PC-3 (cell line): ENCODE measurements at regions of chr6 and their contacts with region 1.

Region 1: DNA sequence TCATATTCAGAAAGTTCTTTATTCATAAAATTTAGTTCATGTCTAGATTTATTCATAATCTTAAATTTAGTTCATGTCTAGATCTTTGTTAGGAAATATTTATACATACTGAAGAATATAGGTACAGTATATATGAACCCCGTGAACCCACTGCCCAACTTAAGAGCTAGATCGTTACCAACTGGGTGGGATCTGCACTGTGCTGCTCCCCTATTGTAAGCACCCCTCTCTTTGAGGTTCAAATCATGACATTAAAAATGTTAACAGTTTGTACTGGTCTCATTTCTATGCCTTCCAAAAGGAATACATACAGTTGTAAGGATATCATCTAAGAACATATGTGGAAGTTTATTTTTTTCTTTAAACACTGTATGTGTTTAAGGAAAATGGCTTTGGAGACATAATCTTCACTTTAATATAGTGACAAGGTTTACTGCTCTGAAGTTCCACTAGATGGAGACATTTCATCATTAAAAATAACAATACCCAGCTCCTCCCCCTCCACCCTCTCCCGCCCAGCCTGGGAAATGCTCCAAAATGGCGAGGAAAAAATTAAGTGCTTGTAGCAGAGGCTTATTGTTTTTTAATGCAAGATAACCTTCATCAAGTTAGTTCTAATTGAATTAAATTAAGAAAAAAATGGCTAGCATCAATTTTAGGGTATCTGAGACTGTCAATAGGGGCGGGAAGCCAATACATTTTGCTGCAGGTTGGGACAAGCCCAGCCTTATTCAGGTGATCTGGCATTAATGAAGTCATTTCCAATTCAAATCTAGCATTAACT is 104.1 kb upstream of the TRAF3IP2 start:
- DNase-seq: peak; percentile 71
- ATAC-seq: peak; percentile 81
- H3K4me3 ChIP-seq: peak overlapping the region; percentile 30; the same call in 1 of the 2 replicates
- H3K27ac ChIP-seq: no peak overlapping the region
- H3K4me1 ChIP-seq: peaks cover 4% of the 10 kb centered on the region; the same call in 1 of the 2 replicates
- H3K27me3 ChIP-seq: no peaks in the 10 kb centered on the region
- CTCF ChIP-seq: peak; percentile 69

Region 2: DNA sequence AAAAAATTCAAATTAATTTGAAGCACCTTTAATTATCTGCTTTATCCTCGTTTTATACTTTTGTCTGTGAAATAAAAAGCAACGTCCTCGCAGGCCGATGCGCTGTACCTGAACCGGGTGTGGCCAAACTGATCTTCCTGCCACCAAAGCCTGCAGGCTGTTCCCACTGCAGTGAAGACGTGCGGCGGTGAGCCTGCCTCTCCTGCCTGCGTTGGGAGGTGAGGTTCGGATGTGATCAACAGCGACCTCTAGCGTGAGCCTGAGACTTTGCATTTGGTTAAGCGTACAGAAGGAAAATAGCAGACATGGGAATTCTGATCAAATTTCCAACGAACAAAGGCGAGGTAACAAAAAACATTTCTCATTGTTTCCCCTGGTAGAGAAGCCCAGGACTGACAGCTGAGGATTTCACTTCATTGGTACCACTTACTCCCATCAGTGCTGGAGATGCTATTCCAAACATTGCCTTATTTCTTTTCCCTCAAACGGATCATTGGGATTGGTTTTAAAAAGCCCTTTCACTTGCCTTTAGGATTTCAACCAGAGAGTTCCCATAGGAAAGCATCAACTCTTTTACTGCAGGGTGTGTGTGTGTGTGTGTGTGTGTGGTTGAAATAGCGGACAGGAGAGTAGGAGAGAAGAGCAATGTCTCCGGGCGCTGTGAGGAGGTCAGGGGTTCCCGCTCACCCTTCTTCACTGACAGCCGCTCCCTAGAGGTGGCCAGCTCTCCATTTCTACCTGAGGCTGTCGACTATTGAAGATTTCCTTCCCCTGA is 287.5 kb after region 1 on chr6:
- CTCF ChIA-PET with region 1: no interaction called
- POLR2A ChIA-PET with region 1: no interaction called
- intact Hi-C with region 1: loop called (anchors 1 kb)
- DNase-seq: peak; percentile 76
- ATAC-seq: peak; percentile 87
- H3K4me3 ChIP-seq: peak overlapping the region; percentile 21; the same call in 1 of the 2 replicates
- H3K27ac ChIP-seq: no peak overlapping the region
- H3K4me1 ChIP-seq: peaks cover 24% of the 10 kb centered on the region
- H3K27me3 ChIP-seq: no peaks in the 10 kb centered on the region
- CTCF ChIP-seq: peak; percentile 82

Region 3: GRCh38 chr6:112169541-112169940 is 459.7 kb after region 1 on chr6:
- CTCF ChIA-PET with region 1: no interaction called
- POLR2A ChIA-PET with region 1: no interaction called
- intact Hi-C with region 1: loop called (anchors 5 kb)
- DNase-seq: no peak
- ATAC-seq: no peak
- H3K4me3 ChIP-seq: no peak overlapping the region
- H3K27ac ChIP-seq: no peak overlapping the region
- H3K4me1 ChIP-seq: no peaks in the 10 kb centered on the region
- H3K27me3 ChIP-seq: no peaks in the 10 kb centered on the region
- CTCF ChIP-seq: no peak

Region 4: DNA sequence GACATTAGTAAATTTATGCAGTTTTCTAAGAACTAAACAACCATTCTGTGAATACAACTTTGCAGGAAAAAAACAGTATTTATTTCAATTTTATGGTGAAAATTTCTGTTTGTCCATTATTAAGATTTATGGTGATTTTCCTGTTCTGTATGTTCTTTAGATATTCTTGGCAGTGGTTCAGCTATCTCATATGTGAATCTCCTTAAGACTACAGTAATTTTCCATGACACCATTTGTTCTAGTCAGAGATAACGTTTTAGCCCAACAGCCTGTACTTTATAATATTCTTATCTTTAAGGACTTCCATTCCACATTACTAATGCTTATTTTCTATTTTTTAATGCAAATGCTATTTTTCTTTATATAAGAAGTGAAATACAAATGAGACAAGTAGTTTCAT is 1141.3 kb after region 1 on chr6:
- CTCF ChIA-PET with region 1: no interaction called
- POLR2A ChIA-PET with region 1: no interaction called
- intact Hi-C with region 1: no loop called
- DNase-seq: no peak
- ATAC-seq: no peak
- H3K4me3 ChIP-seq: no peak overlapping the region
- H3K27ac ChIP-seq: no peak overlapping the region
- H3K4me1 ChIP-seq: no peaks in the 10 kb centered on the region
- H3K27me3 ChIP-seq: no peaks in the 10 kb centered on the region
- CTCF ChIP-seq: no peak